Dorsolateral prefrontal cortex (tissue), 120 donors: ENCODE measurements at regions of chr1 and their contacts with region 1.

Region 1: DNA sequence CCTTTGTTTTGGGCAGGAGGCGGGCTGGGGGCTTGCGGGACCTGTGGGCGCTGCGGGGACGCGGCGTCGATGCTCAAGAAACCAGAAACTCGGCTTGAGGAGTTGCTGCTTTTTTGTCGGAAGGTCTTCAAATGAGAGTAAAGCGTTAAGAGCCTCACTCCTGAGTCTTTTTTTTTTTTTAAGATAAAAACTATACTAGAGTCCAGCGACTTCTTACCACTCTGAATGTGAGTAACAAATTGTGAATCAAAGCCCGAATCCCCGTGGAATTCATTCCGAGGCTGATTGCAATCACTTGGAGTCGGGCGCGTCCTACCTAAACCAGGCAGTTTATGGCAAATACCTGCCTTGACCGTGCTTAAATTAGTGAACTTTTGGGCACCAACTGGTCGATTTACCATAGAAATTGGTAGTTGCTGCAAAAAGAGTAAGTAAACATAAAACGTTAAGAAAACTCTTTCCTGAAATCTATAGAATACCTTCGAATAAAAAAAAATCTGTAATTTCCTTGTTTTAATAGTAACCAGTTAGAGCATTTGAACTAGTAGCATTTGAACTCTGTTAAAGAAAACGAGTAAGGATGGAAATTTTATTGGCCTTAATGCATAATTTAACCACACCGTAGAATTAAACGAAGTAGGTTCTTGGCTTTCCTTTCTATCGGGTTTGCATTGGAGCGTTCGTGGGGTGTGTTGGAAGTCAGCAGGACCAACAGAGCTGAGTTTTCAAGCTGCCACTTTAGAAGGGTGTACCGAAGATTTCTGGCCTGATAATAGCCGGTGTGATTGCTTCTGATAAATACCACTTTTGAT is 769 bp downstream of the GPSM2 start:
- DNase-seq: peak in 2 of 10 donors; percentile 28 to 32
- H3K4me3 ChIP-seq: peak overlapping the region; percentile 61 to 97 (median 85)
- H3K27ac ChIP-seq: peak overlapping the region in 57 of 59 donors; percentile 7 to 99 (median 92)
- H3K27me3 ChIP-seq: no peaks in the 10 kb centered on the region
- CTCF ChIP-seq: no peak

Region 2: DNA sequence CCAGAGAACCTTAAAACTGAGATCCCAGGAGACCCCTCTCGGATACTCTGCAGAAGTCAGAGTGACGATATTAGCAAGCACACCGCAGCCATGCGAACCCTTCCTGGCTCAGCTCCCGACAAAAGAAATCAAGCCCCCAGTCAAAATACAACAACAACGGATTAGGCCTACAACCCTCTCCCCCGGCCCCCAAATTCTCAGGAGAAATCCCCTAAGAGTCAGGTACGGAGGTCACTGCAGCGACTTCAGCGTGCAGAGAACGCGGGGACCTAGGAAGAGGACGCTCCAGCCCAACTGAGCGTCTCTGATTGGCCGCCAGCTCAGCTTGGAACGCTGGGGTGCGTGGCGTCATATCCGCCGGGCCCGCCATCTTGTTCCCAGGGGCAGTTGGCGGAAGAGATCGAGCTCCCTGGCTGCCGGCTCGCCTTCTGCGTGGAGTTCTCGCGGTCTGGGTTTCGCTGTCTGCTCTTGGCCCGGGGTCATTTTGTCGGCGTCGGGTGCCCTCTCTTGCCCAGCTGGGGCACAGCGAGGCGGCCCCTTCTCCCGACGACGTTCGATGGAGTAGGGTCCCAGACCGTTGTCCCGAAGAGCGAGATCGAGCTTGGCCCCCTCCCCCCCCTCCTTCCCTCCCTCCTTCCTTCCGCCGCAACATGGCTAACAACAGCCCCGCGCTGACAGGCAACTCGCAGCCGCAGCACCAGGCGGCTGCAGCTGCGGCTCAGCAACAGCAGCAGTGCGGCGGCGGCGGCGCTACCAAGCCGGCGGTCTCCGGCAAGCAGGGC is 185.4 kb before region 1 on chr1 and contains the start of gene PRPF38B:
- intact Hi-C with region 1: loop called in 1 of 2 experiments (anchors 10 kb)
- DNase-seq: peak; percentile 94 to 97 (median 96)
- H3K4me3 ChIP-seq: peak within 1 kb of the TSS; percentile 53 to 96 (median 87)
- H3K27ac ChIP-seq: peak within 1 kb of the TSS; percentile 91 to 99 (median 98)
- H3K27me3 ChIP-seq: no peaks in the 10 kb centered on the region
- CTCF ChIP-seq: peak in 24 of 56 donors; percentile 8 to 51 (median 26)
- total RNA-seq, gene PRPF38B: 22.4 to 46.1 (median 32.8) TPM

Region 3: DNA sequence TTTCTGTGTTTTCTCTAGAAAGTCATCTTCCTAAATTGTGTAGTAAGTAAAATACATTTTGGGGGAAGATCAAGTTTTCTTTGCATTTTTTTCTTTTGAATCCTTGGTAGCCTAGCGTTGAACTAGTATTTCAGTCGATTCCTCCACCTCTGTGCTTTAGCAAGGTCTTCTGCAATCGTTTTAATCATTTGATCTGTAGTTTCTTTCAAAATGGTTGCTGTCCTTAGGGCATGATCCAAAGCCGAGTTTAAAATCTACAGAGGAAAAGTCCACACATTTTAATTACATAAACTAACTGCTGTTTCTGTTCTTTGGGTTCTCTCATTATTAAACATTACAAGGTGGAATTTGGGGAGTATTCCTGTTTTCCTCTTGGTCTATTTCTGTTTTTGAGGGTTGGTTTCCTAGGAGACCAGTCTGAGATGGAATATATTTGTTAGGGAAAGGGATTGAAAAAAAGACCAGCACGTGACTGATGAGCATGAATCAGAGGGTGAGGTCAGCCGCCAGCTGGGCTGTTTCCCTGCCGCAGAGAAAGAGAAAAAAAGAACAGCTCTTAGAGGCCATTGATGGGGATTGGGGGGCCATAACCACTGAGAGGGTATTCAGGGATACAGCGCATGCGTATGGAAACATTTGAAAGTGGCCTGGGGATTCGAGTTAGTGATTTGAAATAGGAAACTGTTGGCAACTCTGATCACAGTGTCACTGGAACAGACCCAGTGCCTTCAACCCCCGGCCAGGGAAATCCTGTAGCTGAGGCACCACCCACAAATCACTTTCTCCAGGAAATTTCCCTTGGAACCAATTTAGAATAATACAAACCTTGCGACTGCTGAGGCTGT is 61.3 kb before region 1 on chr1:
- intact Hi-C with region 1: loop called in 1 of 2 experiments (anchors 2 kb)
- DNase-seq: peak; percentile 63 to 90 (median 83)
- H3K4me3 ChIP-seq: peak overlapping the region; percentile 16 to 63 (median 44)
- H3K27ac ChIP-seq: peak overlapping the region; percentile 80 to 100 (median 97)
- H3K27me3 ChIP-seq: no peaks in the 10 kb centered on the region
- CTCF ChIP-seq: peak in 8 of 56 donors; percentile 3 to 31 (median 10)

Region 4: DNA sequence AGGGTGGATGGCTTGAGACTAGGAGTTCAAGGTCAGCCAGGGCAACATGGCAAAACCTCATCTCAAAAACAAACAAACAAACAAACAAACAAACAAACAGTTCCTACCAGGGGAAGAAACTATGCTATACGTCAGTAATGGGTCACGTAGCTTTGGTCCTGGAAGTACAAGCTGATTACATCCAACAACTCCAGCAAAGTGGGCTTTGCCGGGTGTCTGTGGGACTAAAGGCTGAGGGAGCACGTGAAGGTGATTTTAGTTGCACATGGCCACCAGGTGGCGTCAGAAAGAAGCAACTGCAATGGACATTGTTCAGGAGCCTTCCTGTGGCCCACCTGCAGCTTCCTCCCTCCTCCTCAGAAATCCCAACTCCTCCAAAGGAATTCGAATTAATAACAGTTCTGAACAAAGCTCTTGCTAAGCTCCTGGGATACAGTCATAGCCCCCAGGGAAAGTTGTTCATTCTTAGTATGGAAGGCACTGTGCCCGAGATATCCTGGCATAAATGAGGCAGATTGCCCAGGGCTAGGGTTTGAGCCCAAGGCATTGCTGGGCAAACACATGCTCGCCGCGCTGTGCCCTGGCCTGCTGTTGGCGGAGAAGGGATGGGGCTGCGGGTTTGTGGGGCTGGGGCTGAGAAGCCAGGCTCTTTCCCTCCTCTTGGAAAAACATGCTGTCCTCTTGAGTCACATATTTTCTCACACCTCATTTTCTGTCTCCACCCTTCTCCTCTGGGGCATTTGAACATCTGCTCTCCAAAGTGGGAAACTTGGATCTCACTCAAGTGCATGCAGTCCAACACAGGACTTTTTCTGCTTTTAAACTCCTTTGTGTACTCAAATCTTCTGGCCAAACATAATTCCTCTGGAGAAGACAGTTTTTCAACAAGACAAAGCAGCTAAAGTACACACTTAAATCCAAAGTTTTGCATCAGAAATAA is 49.3 kb before region 1 on chr1:
- intact Hi-C with region 1: loop called in 1 of 2 experiments (anchors 5 kb)
- DNase-seq: peak; percentile 59 to 88 (median 78)
- H3K4me3 ChIP-seq: peak overlapping the region in 16 of 59 donors; percentile 3 to 46 (median 18)
- H3K27ac ChIP-seq: peak overlapping the region in 54 of 59 donors; percentile 6 to 95 (median 83)
- H3K27me3 ChIP-seq: no peaks in the 10 kb centered on the region
- CTCF ChIP-seq: peak; percentile 56 to 92 (median 82)